ENCODE measurements at regions of chr11 and their contacts with region 1.

Region 1: GRCh38 chr11:69101115-69101791 is 52.5 kb downstream of the TPCN2 start:
- DNase-seq: peak; percentile 83
- ATAC-seq: peak; percentile 83

Region 2: GRCh38 chr11:69157156-69157821 is 56.0 kb after region 1 on chr11:
- intact Hi-C with region 1: no loop called
- DNase-seq: peak; percentile 89
- ATAC-seq: peak; percentile 91

Region 3: DNA sequence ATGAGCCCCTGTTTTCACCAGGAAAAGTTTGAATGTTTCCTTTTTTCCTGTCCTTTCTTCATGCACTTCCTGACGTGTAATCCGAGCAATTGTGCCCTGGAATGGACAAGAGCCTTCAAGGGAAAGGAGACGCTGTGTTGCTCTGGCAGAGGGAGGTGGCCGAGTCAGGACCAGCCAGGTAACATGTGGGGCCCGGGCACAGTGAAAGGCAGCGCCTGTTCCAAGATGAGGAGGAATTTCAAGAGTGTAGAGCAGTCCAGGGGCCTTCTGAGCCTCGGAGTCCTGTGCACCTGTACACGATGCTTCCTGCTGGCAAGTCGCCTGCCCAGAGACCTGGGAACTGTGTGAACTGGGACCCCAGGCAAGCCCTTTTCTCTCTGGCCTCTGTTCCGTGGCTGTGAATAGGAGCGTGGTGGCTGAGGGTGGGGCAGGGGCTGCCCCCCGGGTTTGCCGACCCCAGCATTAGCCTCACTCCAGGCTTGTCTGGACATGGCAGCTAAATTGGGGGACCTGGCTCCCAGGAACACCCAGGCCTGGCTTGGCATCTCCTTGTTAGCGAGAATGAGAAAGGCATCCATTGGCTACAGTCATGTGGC is 284.7 kb after region 1 on chr11:
- intact Hi-C with region 1: no loop called
- DNase-seq: no peak
- ATAC-seq: no peak

Region 4: GRCh38 chr11:69654569-69655327 is 553.5 kb after region 1 on chr11:
- intact Hi-C with region 1: loop called (anchors 5 kb)
- DNase-seq: peak; percentile 56
- ATAC-seq: no peak

Region 5: GRCh38 chr11:69670158-69670845 is 569.0 kb after region 1 on chr11:
- intact Hi-C with region 1: loop called (anchors 5 kb)
- DNase-seq: peak; percentile 92
- ATAC-seq: peak; percentile 85

Region 6: DNA sequence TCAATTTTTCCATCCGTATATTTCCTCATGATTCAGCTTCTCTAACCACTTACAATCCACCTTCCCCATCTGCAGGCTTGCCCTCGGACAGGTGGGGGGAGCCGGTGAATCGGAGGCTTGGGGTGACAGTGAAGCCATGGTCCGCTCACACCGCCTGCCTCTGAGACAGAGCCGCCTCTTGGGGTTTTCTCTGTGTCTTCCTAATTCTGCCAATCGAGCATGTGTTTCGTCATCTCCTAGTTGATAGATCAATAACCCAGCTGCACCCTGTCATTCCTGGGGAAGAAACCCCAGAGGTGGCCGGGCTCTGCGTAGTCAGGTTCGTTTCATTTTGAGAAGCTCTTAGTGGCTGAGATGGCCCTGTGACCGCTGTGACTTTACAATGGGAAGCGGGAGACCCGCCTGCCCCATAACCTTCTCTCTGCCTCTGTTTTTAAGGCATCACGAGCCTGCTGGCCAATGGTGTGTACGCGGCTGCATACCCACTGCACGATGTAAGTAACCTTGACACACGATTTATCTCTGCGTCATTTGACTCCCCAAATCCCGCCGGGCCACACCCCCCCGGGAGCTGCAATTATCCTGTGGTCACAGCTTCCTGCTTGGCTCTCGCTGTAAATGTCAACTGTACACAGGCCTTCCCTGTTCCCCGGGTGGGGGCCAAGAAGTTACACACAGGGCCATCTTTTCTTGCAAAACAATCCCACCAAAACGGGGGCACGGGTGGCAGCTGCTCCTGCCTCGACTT is 1010.2 kb after region 1 on chr11:
- intact Hi-C with region 1: no loop called
- DNase-seq: no peak
- ATAC-seq: peak; percentile 59

Measured in sciatic nerve (tissue), 2 donors.